ENCODE measurements at regions of chr19 and their contacts with region 1.

Region 1: GRCh38 chr19:57317503-57317902 is 2.8 kb upstream of the ZNF543 start:
- DNase-seq: peak; percentile 48
- ATAC-seq: peak; percentile 15; the same call in 1 of the 2 replicates
- H3K4me3 Mint-ChIP-seq: peak overlapping the region; percentile 15
- H3K27ac Mint-ChIP-seq: no peak overlapping the region
- H3K4me1 Mint-ChIP-seq: peaks cover 18% of the 10 kb centered on the region
- H3K27me3 Mint-ChIP-seq: peaks cover 43% of the 10 kb centered on the region
- CTCF ChIP-seq: no peak

Region 2: DNA sequence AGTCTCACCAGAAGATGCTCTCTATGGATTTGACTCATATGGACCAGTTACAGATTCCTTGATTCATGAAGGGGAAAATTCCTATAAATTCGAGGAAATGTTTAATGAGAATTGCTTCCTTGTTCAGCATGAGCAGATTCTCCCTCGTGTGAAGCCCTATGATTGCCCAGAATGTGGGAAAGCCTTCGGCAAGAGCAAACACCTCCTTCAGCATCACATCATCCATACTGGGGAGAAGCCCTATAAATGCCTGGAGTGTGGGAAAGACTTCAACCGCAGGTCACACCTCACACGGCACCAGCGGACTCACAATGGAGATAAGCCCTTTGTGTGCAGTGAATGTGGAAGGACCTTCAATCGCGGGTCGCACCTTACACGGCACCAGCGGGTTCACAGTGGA is 26.5 kb before region 1 on chr19:
- CTCF ChIA-PET with region 1: no interaction called
- POLR2A ChIA-PET with region 1: interaction called, 10 read pairs
- DNase-seq: no peak
- ATAC-seq: no peak
- H3K4me3 Mint-ChIP-seq: no peak overlapping the region
- H3K27ac Mint-ChIP-seq: no peak overlapping the region
- H3K4me1 Mint-ChIP-seq: no peaks in the 10 kb centered on the region
- H3K27me3 Mint-ChIP-seq: no peaks in the 10 kb centered on the region
- CTCF ChIP-seq: no peak

Region 3: DNA sequence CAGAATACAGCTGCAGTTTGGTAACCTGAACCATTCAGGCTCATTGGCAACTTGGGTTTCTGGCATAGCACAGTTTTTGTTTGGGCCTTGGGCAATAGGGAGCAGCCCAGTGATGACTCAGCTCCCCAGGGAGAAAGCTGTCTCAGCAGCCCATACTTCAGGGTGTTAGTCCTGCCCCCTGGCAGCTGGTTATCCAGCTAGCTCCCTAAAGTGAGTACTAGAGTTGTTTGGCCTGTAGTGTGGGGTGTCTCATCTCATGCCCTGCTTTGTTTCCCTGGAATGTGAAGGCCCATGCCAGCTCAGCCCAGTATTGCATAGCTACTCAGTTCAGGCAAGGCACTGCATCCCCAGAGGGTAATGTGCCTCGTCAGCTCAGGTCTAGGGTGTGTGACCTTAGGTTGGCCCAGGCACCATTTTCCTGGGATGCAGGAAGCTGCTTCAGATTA is 15.5 kb before region 1 on chr19:
- CTCF ChIA-PET with region 1: interaction called, 11 read pairs
- POLR2A ChIA-PET with region 1: interaction called, 3 read pairs
- DNase-seq: no peak
- ATAC-seq: no peak; the same call in none of the 2 replicates
- H3K4me3 Mint-ChIP-seq: no peak overlapping the region
- H3K27ac Mint-ChIP-seq: peak overlapping the region; percentile 1; the same call in 1 of the 2 replicates
- H3K4me1 Mint-ChIP-seq: 0 out of 2 replicates have a peak, but pooled peaks cover 2% of the 10 kb centered on the region
- H3K27me3 Mint-ChIP-seq: no peaks in the 10 kb centered on the region
- CTCF ChIP-seq: no peak

Region 4: GRCh38 chr19:57338877-57339276 is 21.4 kb after region 1 on chr19:
- CTCF ChIA-PET with region 1: no interaction called
- POLR2A ChIA-PET with region 1: no interaction called
- DNase-seq: no peak
- ATAC-seq: no peak
- H3K4me3 Mint-ChIP-seq: no peak overlapping the region
- H3K27ac Mint-ChIP-seq: no peak overlapping the region
- H3K4me1 Mint-ChIP-seq: no peaks in the 10 kb centered on the region
- H3K27me3 Mint-ChIP-seq: peaks cover 4% of the 10 kb centered on the region
- CTCF ChIP-seq: no peak

Region 5: GRCh38 chr19:57362997-57363705 is 45.6 kb after region 1 on chr19 and contains the starts of genes TRAPPC2B and ZNF547:
- CTCF ChIA-PET with region 1: no interaction called
- POLR2A ChIA-PET with region 1: no interaction called
- DNase-seq: peak; percentile 99
- ATAC-seq: peak; percentile 99
- H3K4me3 Mint-ChIP-seq: peak within 1 kb of the TSS; percentile 96
- H3K27ac Mint-ChIP-seq: peak within 1 kb of the TSS; percentile 99
- H3K4me1 Mint-ChIP-seq: peaks cover 10% of the 10 kb centered on the region
- H3K27me3 Mint-ChIP-seq: no peaks in the 10 kb centered on the region
- CTCF ChIP-seq: no peak
- total RNA-seq, gene TRAPPC2B: 10.5 to 11.7 TPM (median 10.5 TPM) in 3 replicates
- total RNA-seq, gene ZNF547: 2.3 to 2.7 TPM (median 2.4 TPM) in 3 replicates